Heart right ventricle (tissue), 16 donors: ENCODE measurements at regions of chrX and their contacts with region 1.

Region 1: DNA sequence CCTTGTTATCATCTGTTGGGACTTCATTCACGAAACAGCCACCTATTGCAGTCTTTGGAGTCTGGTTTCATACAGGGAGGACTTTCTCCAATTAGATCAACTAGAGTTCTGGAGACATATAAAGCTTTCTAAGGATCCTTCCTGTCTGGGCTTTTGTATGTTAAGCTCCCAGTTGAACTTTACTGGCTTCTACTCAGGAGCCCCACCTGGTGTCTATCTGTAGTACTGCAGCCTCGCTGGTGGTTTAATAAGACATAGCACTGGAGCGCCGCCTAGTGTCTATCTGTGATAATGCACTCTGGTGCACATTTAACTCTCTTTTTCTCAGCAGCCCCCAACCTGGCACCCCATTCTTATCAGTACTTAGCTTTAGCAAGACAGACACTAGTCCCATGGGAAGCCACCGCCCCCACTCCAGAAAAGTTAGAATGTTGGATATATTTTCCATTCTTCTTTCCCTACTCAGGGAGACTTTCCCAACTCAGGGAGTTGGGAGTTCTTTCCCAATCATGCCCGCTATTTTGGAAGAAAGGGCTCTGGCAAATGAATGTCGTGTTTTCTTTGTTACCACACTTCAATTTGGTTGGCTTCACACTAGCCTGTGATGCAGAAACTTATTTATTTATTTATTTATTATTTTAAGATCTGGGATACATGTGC is 36.9 kb upstream of the SYTL4 start:
- DNase-seq: peak; percentile 65 to 73
- ATAC-seq: peak in 4 of 8 donors; percentile 23 to 69 (median 35)
- H3K4me3 ChIP-seq: no peak overlapping the region
- H3K27ac ChIP-seq: no peak overlapping the region
- H3K4me1 ChIP-seq: no peaks in the 10 kb centered on the region
- H3K27me3 ChIP-seq: peaks cover 0 to 18% (median 0%) of the 10 kb centered on the region in 7 donors
- CTCF ChIP-seq: peak; percentile 87 to 99 (median 89)

Region 2: GRCh38 chrX:100674705-100675104 is 94.1 kb before region 1 on chrX:
- intact Hi-C with region 1: loop called in 1 of 10 experiments (anchors 5 kb)
- DNase-seq: no peak
- ATAC-seq: peak in 2 of 8 donors; percentile 16 to 38
- H3K4me3 ChIP-seq: no peak overlapping the region
- H3K27ac ChIP-seq: no peak overlapping the region
- H3K4me1 ChIP-seq: peaks cover 0 to 14% (median 0%) of the 10 kb centered on the region in 9 donors
- H3K27me3 ChIP-seq: peaks cover 0 to 72% (median 0%) of the 10 kb centered on the region in 7 donors
- CTCF ChIP-seq: no peak

Region 3: GRCh38 chrX:100685284-100685996 is 83.4 kb before region 1 on chrX:
- intact Hi-C with region 1: loop called (anchors 1 to 10 kb)
- DNase-seq: peak in 1 of 2 donors; percentile 55
- ATAC-seq: peak in 7 of 8 donors; percentile 30 to 79 (median 71)
- H3K4me3 ChIP-seq: no peak overlapping the region
- H3K27ac ChIP-seq: no peak overlapping the region
- H3K4me1 ChIP-seq: no peaks in the 10 kb centered on the region
- H3K27me3 ChIP-seq: peaks cover 0 to 36% (median 0%) of the 10 kb centered on the region in 7 donors
- CTCF ChIP-seq: peak; percentile 48 to 83 (median 77)

Region 4: GRCh38 chrX:100819837-100820666 is 51.2 kb after region 1 on chrX and contains the start of gene CSTF2:
- intact Hi-C with region 1: no loop called
- DNase-seq: peak; percentile 71 to 80
- ATAC-seq: peak; percentile 99 to 100 (median 100)
- H3K4me3 ChIP-seq: peak within 1 kb of the TSS; percentile 34 to 75 (median 66)
- H3K27ac ChIP-seq: peak within 1 kb of the TSS in 8 of 10 donors; percentile 26 to 62 (median 57)
- H3K4me1 ChIP-seq: peaks cover 0 to 7% (median 3%) of the 10 kb centered on the region in 9 donors
- H3K27me3 ChIP-seq: peaks cover 0 to 37% (median 0%) of the 10 kb centered on the region in 7 donors
- CTCF ChIP-seq: peak in 4 of 9 donors; percentile 4 to 33 (median 18)
- total RNA-seq, gene CSTF2: 5.7 to 10.7 (median 8.0) TPM